Naive thymus-derived CD8-positive, alpha-beta T cell (primary cell): ENCODE measurements at regions of chr10 and their contacts with region 1.

Region 1: GRCh38 chr10:43407576-43408330 is 1.2 kb downstream of the HNRNPF start:
- DNase-seq: peak; percentile 70 to 91 (median 78)
- ATAC-seq: peak; percentile 35 to 43
- H3K4me3 Mint-ChIP-seq: peak overlapping the region; percentile 95 to 100 (median 100)
- H3K27ac Mint-ChIP-seq: peak overlapping the region; percentile 98 to 100 (median 99)
- H3K4me1 Mint-ChIP-seq: peaks cover 24 to 50% (median 38%) of the 10 kb centered on the region in 4 donors
- H3K27me3 Mint-ChIP-seq: no peaks in the 10 kb centered on the region

Region 2: GRCh38 chr10:43202224-43202656 is 205.5 kb before region 1 on chr10:
- POLR2A ChIA-PET with region 1: no interaction called
- DNase-seq: peak in 9 of 10 donors; percentile 30 to 77 (median 47)
- ATAC-seq: peak; percentile 73 to 78
- H3K4me3 Mint-ChIP-seq: peak overlapping the region; percentile 73 to 89 (median 84)
- H3K27ac Mint-ChIP-seq: peak overlapping the region in 3 of 10 donors; percentile 6 to 80 (median 15)
- H3K4me1 Mint-ChIP-seq: peaks cover 4 to 10% (median 6%) of the 10 kb centered on the region in 4 donors
- H3K27me3 Mint-ChIP-seq: no peaks in the 10 kb centered on the region

Region 3: GRCh38 chr10:43361986-43362839 is 45.5 kb before region 1 on chr10:
- POLR2A ChIA-PET with region 1: interaction called, 19 read pairs
- DNase-seq: peak; percentile 91 to 99 (median 96)
- ATAC-seq: peak; percentile 97 to 98
- H3K4me3 Mint-ChIP-seq: peak overlapping the region; percentile 84 to 100 (median 97)
- H3K27ac Mint-ChIP-seq: peak overlapping the region; percentile 95 to 99 (median 97)
- H3K4me1 Mint-ChIP-seq: peaks cover 15 to 31% (median 30%) of the 10 kb centered on the region in 4 donors
- H3K27me3 Mint-ChIP-seq: peaks cover 0 to 2% (median 0%) of the 10 kb centered on the region in 5 donors

Region 4: GRCh38 chr10:43396928-43397624 is 10.7 kb before region 1 on chr10:
- POLR2A ChIA-PET with region 1: interaction called, 22 read pairs
- DNase-seq: peak; percentile 53 to 80 (median 70)
- ATAC-seq: peak; percentile 73 to 75
- H3K4me3 Mint-ChIP-seq: peak overlapping the region; percentile 85 to 97 (median 94)
- H3K27ac Mint-ChIP-seq: peak overlapping the region; percentile 93 to 99 (median 97)
- H3K4me1 Mint-ChIP-seq: peaks cover 32 to 87% (median 83%) of the 10 kb centered on the region in 4 donors
- H3K27me3 Mint-ChIP-seq: no peaks in the 10 kb centered on the region

Region 5: GRCh38 chr10:43420369-43421200 is 12.8 kb after region 1 on chr10:
- POLR2A ChIA-PET with region 1: interaction called, 49 read pairs
- DNase-seq: peak; percentile 73 to 88 (median 84)
- ATAC-seq: peak; percentile 87 to 91
- H3K4me3 Mint-ChIP-seq: peak overlapping the region; percentile 88 to 94 (median 92)
- H3K27ac Mint-ChIP-seq: peak overlapping the region; percentile 96 to 98 (median 97)
- H3K4me1 Mint-ChIP-seq: peaks cover 14 to 45% (median 35%) of the 10 kb centered on the region in 4 donors
- H3K27me3 Mint-ChIP-seq: no peaks in the 10 kb centered on the region

Region 6: DNA sequence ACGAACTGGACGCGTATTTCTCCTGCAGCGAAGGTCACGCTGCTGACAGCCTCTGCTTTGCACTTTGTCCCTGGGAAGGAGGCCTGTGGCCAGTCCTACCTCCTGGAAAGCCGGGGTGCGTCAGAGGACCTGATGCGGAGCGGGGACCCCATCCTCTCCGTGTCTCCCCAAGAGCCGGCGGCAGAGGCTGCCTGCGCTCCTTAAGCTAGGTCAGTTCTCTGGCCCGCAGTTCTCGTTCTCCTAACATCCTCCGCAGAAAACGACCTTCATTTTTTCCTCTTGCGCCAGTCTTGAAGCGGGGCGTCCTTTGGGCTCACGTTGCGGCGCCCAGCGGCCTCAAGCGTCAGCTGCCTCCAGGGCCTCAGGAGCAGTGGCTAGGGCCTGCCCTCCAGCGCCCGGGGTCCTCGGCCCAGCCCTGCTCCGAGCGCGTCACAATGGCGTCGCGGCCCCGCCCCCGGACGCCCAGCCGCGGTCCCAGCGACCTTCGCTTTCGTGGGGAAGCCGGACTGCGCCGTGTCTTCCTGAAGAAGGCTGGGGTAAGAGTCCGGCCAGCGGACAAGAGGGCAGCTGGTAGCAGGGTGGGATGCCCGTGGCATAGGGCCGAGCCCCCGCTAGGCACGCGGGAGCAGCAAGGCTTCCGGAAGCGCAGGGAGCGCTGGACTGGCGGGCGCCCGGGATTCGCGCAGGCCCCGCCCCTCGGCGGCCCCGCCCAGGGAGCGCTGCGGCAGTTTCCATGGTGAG is 28.8 kb after region 1 on chr10 and contains the start of gene ZNF487:
- POLR2A ChIA-PET with region 1: interaction called, 38 read pairs
- DNase-seq: peak; percentile 81 to 97 (median 92)
- ATAC-seq: peak; percentile 88 to 90
- H3K4me3 Mint-ChIP-seq: peak within 1 kb of the TSS; percentile 89 to 100 (median 96)
- H3K27ac Mint-ChIP-seq: peak within 1 kb of the TSS; percentile 94 to 100 (median 99)
- H3K4me1 Mint-ChIP-seq: peaks cover 4 to 31% (median 25%) of the 10 kb centered on the region in 4 donors
- H3K27me3 Mint-ChIP-seq: no peaks in the 10 kb centered on the region
- polyA plus RNA-seq, gene ZNF487: 4.0 to 6.0 (median 5.1) TPM

Region 7: GRCh38 chr10:43749940-43750552 is 342.3 kb after region 1 on chr10:
- POLR2A ChIA-PET with region 1: no interaction called
- DNase-seq: no peak
- ATAC-seq: no peak
- H3K4me3 Mint-ChIP-seq: no peak overlapping the region
- H3K27ac Mint-ChIP-seq: no peak overlapping the region
- H3K4me1 Mint-ChIP-seq: no peaks in the 10 kb centered on the region
- H3K27me3 Mint-ChIP-seq: peaks cover 0 to 1% (median 0%) of the 10 kb centered on the region in 5 donors